Calu3 (cell line): ENCODE measurements at regions of chr2 and their contacts with region 1.

Region 1: DNA sequence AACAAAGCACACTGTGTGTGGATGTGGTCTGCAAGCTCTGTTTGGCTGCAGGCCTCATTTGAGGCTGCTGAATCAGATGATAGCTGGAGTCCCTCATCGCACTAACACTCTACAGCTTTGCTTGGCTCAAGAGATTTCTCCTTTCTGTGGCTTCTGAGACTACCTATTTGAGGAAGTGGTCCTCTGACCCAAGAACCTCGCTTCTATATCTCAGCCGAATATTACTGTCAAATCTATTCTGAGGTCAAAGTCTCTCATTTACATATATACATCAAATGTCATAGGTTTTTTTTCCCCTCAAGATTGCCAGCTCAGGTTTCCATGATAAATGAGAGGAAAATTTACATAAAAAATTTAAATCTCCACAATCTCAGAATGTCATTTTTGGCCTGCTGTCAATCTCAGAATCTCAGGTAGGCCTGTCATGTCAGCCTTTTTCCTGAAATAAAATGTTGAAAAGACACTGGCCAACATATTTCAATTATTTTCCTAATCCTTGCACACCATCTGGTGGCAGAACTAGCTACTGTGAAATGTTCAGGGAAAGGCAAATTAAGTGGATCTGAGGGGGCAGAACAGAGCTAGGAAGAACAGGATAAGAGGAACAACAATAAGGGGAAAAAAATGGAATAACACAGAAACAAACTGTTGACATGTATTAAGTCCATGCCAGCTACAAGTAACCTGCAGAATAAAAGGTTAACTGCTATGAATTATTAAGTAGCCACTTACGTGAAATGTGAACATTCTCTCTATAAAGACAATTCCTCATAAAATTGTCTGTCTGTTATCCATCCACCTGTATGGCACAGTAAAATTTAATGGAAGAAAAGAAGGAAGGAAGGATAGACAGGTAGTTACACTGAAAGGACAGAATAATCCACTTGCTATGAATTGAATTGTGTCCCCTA is 39.3 kb downstream of the AP1S3 start:
- DNase-seq: no peak
- H3K4me3 Mint-ChIP-seq: peak overlapping the region; percentile 23
- H3K27ac Mint-ChIP-seq: peak overlapping the region; percentile 96
- H3K4me1 Mint-ChIP-seq: peaks cover 78% of the 10 kb centered on the region
- H3K27me3 Mint-ChIP-seq: no peaks in the 10 kb centered on the region
- CTCF ChIP-seq: peak; percentile 48

Region 2: DNA sequence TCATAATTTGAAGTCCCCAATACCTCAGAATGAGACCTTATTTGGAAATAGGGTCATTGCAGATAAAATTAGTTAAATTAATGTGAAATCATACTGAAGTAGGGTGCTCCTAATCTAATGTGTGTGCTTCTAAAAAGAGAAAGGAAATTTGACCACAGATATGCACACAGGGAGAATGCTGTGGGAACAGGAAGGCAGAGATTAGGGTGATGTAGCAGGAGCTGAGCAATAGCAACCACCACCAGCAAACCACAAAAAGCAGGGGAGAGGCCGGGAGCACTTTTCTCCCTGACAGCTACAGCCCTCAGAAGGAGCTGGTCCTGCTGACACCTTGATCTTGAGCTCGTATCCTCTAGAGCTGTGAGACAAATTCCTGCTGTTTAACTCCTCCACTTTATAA is 171.3 kb before region 1 on chr2:
- CTCF ChIA-PET with region 1: no interaction called
- intact Hi-C with region 1: no loop called
- DNase-seq: no peak
- H3K4me3 Mint-ChIP-seq: no peak overlapping the region
- H3K27ac Mint-ChIP-seq: no peak overlapping the region
- H3K4me1 Mint-ChIP-seq: no peaks in the 10 kb centered on the region
- H3K27me3 Mint-ChIP-seq: no peaks in the 10 kb centered on the region
- CTCF ChIP-seq: no peak

Region 3: GRCh38 chr2:223674998-223675609 is 123.0 kb before region 1 on chr2:
- CTCF ChIA-PET with region 1: interaction called, 4 read pairs
- intact Hi-C with region 1: loop called (anchors 5 kb)
- DNase-seq: peak; percentile 69
- H3K4me3 Mint-ChIP-seq: no peak overlapping the region
- H3K27ac Mint-ChIP-seq: peak overlapping the region; percentile 25
- H3K4me1 Mint-ChIP-seq: peaks cover 27% of the 10 kb centered on the region
- H3K27me3 Mint-ChIP-seq: no peaks in the 10 kb centered on the region
- CTCF ChIP-seq: peak; percentile 70

Region 4: DNA sequence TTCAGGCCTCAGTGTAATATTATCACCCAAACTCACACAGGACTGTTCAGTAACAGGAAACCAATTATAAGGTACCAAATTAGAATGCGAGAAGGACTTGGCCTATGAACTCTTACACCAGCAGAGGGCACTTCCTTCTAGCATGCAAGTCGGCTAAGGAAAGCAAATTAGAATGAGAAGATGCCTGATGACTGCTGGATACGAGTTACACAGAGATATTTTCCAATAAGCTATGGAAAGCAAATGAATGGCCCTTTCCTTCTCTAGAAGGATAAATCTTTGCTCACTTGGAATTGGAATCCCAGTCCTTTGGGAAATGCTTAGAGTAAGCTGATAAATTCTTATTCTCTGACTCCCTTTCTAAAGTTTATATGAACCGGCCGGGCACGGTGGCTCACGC is 70.5 kb before region 1 on chr2:
- CTCF ChIA-PET with region 1: interaction called, 6 read pairs
- intact Hi-C with region 1: loop called (anchors 1 kb)
- DNase-seq: peak; percentile 51
- H3K4me3 Mint-ChIP-seq: no peak overlapping the region
- H3K27ac Mint-ChIP-seq: peak overlapping the region; percentile 20
- H3K4me1 Mint-ChIP-seq: peaks cover 61% of the 10 kb centered on the region
- H3K27me3 Mint-ChIP-seq: no peaks in the 10 kb centered on the region
- CTCF ChIP-seq: peak; percentile 61

Region 5: DNA sequence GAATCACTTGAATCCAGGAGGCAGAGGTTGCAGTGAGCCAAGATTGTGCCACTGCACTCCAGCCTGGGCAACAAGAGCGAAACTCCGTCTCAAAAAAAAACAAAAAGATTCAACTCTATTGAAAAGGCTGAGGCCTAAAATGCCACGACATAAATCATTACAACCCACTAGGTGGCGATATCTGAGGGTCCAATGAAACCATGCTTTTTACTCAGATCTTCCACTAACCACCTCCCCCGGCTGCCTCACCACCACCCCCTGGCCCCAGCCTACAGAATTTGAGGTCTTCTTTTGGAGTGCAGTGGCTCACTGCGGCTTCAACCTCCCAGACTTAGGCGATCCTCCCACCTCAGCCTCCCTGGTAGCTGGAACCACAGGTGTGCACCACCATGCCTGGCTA is 18.2 kb before region 1 on chr2:
- CTCF ChIA-PET with region 1: interaction called, 10 read pairs
- intact Hi-C with region 1: no loop called
- DNase-seq: peak; percentile 64
- H3K4me3 Mint-ChIP-seq: no peak overlapping the region
- H3K27ac Mint-ChIP-seq: no peak overlapping the region
- H3K4me1 Mint-ChIP-seq: peaks cover 27% of the 10 kb centered on the region
- H3K27me3 Mint-ChIP-seq: no peaks in the 10 kb centered on the region
- CTCF ChIP-seq: peak; percentile 34

Region 6: GRCh38 chr2:223837287-223838061 is 39.4 kb after region 1 on chr2 and contains the start of gene AP1S3:
- CTCF ChIA-PET with region 1: interaction called, 4 read pairs
- intact Hi-C with region 1: loop called (anchors 5 kb)
- DNase-seq: peak; percentile 91
- H3K4me3 Mint-ChIP-seq: peak within 1 kb of the TSS; percentile 88
- H3K27ac Mint-ChIP-seq: peak within 1 kb of the TSS; percentile 89
- H3K4me1 Mint-ChIP-seq: peaks cover 34% of the 10 kb centered on the region
- H3K27me3 Mint-ChIP-seq: no peaks in the 10 kb centered on the region
- CTCF ChIP-seq: no peak
- total RNA-seq, gene AP1S3: 108 and 119 TPM in 2 replicates